Activated CD4-positive, alpha-beta T cell treated with anti-CD3 and anti-CD28 coated beads for 36 hours (primary cell): ENCODE measurements at regions of chr19 and their contacts with region 1.

Region 1: DNA sequence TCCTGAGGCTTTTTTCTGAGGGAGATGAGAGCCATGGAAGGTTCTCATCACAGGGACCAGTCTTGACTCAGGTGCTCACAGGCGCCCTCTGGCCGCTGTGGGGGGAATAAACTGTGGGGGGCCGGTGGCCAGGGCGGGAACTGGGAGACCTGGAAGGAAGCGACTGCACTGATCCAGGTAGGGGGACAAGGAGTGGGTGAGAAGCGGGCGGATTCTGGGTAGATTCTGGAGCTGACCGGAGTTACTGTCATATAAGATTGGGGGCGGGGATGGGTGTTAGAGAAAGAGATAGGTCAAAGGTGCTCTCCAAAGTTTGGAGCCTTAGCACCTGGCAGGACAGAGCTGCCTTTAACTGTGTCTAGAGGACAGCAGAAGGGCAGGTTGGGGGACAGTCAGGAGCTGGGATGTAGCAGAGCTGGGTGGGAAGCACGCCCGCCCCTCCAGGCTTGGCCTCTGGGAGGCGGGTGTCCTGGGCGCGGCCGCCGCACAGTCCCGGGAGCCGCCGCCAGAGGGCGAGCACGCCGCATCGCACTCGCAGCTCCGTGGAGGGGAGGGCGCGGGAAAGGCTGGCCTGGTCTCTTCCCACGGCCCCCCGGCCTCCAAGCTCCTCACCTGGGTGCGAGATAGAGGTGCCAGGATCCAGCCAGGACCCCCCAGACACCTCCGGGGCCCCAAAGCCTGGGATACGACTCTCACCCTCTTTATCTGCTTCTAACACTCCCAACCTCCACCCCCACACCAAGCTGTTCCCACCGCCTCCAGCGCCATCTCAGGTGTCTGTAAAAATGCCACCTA is 4.2 kb upstream of the DAND5 start:
- DNase-seq: peak; percentile 91
- ATAC-seq: peak; percentile 92
- H3K4me3 Mint-ChIP-seq: peak overlapping the region; percentile 73
- H3K27ac Mint-ChIP-seq: peak overlapping the region; percentile 89
- H3K4me1 Mint-ChIP-seq: peaks cover 11% of the 10 kb centered on the region
- H3K27me3 Mint-ChIP-seq: no peaks in the 10 kb centered on the region

Region 2: DNA sequence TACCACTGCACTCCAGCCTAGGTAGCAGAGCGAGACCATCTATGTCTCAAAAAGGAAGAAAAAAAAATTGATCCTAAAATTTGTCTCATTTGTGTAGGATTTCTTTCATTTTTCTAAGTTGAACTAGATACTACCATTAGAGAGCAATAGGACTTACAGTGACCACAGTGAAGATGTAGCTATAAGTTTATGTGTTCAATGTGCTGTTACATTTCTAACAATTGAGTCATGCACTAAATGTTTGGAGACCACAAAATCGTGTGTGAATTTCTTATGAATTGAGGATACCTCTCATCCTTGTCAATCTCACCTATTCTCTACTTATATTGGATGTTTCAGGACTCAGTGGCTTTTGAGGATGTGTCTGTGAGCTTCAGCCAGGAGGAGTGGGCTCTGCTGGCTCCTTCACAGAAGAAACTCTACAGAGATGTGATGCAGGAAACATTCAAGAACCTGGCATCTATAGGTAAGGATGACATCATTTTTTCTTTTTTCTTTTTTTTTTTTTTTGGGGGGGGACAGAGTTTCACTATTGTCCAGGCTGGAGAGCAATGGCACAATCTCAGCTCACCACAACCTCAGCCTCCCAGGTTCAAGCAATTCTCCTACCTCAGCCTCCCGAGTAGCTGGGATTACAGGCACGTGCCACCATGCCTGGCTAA is 341.7 kb before region 1 on chr19:
- CTCF ChIA-PET with region 1: no interaction called
- POLR2A ChIA-PET with region 1: no interaction called
- intact Hi-C with region 1: no loop called
- DNase-seq: no peak
- ATAC-seq: no peak
- H3K4me3 Mint-ChIP-seq: no peak overlapping the region
- H3K27ac Mint-ChIP-seq: no peak overlapping the region
- H3K4me1 Mint-ChIP-seq: peaks cover 3% of the 10 kb centered on the region
- H3K27me3 Mint-ChIP-seq: no peaks in the 10 kb centered on the region

Region 3: GRCh38 chr19:12938234-12939025 is 26.8 kb before region 1 on chr19 and contains the start of gene CALR:
- CTCF ChIA-PET with region 1: interaction called, 13 read pairs
- POLR2A ChIA-PET with region 1: no interaction called
- intact Hi-C with region 1: loop called in 1 of 2 experiments (anchors 1 kb)
- DNase-seq: peak; percentile 99
- ATAC-seq: peak; percentile 89
- H3K4me3 Mint-ChIP-seq: peak within 1 kb of the TSS; percentile 99
- H3K27ac Mint-ChIP-seq: peak within 1 kb of the TSS; percentile 96
- H3K4me1 Mint-ChIP-seq: peaks cover 59% of the 10 kb centered on the region
- H3K27me3 Mint-ChIP-seq: no peaks in the 10 kb centered on the region
- total RNA-seq, gene CALR: 557 to 569 TPM

Region 4: DNA sequence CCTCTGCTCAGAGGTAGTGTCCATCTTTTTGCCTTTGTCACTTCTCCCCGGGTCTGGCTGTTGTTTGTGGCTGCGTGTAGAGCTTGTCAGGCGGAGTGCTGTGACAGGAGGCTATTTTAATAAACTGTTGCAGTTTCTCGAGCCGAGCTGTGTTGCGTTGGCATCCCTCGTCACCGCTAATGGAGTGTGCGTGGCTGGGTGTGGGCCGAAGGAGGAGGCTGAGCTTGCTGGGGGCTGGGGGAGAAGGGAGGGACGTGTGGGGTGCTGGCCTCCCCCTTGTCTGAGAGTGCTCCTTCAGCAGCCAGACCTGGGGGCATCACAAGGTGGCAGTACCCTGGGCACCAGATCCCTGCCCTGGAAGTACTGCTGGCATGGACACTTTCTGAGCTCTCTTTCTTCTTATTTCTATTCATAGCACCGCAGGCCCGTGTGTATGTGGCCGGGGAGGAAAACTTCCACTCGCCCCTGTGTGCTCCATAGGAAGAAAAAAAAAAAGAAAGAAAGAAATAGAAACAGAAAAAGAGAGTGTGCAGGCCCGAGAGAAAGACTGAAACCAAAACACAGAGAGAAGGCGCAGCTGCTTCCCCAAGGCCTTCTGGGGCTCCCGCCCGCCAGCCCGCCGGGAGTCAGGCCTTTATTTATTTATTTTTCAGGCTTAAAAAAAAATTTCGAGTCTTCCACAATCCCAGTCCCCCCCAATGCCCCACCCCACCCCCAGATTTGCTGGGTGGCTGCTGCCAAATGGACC is 57.1 kb after region 1 on chr19:
- CTCF ChIA-PET with region 1: interaction called, 10 read pairs
- POLR2A ChIA-PET with region 1: no interaction called
- intact Hi-C with region 1: no loop called
- DNase-seq: peak; percentile 20
- ATAC-seq: no peak
- H3K4me3 Mint-ChIP-seq: no peak overlapping the region
- H3K27ac Mint-ChIP-seq: no peak overlapping the region
- H3K4me1 Mint-ChIP-seq: peaks cover 18% of the 10 kb centered on the region
- H3K27me3 Mint-ChIP-seq: peaks cover 35% of the 10 kb centered on the region

Region 5: GRCh38 chr19:13060964-13061927 is 96.0 kb after region 1 on chr19:
- CTCF ChIA-PET with region 1: interaction called, 61 read pairs
- POLR2A ChIA-PET with region 1: no interaction called
- intact Hi-C with region 1: no loop called
- DNase-seq: peak; percentile 89
- ATAC-seq: peak; percentile 99
- H3K4me3 Mint-ChIP-seq: peak overlapping the region; percentile 67
- H3K27ac Mint-ChIP-seq: no peak overlapping the region
- H3K4me1 Mint-ChIP-seq: peaks cover 6% of the 10 kb centered on the region
- H3K27me3 Mint-ChIP-seq: peaks cover 16% of the 10 kb centered on the region

Region 6: DNA sequence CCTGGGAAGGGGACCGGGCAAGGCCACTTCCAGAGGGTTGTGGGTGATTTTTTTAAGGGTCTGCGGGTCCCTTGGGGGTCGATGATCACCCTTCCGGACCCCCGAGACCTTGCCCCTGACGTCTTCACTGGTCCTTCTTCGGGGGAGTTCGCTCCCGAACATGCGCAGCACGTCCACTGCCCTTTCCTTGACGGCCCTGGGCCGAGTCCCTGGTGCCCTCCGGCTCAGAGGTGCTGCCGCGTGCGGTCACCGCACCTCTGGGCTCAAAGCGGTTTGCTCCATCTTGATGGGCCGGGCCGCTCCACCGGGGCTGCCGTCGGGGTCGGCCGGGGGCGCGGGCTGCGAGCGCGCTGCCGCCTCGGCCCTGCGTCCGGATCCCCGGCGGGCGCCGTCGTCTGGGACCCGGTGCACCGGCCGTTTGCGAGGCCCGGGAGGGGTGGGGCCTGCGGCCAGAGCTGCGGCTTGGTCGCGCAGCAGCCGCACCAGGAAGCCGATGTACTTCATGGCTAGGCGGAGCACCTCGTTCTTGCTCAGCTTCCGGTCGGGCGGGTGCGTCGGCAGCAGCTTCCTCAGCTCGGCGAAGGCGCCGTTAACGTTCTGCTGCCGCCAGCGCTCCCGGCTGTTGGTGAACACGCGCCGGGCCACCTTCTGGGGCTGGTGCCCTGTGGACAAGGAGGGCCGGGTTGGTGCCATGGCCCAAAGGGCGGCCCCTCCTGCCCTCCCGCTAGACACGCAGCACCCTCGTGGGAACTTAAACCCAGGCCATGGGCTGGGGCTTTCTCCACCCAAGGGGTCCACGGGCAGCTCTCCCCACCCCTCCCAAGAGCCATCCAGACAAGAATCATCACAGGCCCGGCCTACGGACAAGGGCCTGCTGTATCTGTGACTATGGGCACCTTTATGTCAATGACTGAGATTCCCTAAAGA is 134.1 kb after region 1 on chr19:
- CTCF ChIA-PET with region 1: interaction called, 34 read pairs
- POLR2A ChIA-PET with region 1: interaction called, 3 read pairs
- intact Hi-C with region 1: no loop called
- DNase-seq: peak; percentile 89
- ATAC-seq: peak; percentile 61
- H3K4me3 Mint-ChIP-seq: peak overlapping the region; percentile 65
- H3K27ac Mint-ChIP-seq: peak overlapping the region; percentile 85
- H3K4me1 Mint-ChIP-seq: peaks cover 54% of the 10 kb centered on the region
- H3K27me3 Mint-ChIP-seq: peaks cover 32% of the 10 kb centered on the region

Region 7: DNA sequence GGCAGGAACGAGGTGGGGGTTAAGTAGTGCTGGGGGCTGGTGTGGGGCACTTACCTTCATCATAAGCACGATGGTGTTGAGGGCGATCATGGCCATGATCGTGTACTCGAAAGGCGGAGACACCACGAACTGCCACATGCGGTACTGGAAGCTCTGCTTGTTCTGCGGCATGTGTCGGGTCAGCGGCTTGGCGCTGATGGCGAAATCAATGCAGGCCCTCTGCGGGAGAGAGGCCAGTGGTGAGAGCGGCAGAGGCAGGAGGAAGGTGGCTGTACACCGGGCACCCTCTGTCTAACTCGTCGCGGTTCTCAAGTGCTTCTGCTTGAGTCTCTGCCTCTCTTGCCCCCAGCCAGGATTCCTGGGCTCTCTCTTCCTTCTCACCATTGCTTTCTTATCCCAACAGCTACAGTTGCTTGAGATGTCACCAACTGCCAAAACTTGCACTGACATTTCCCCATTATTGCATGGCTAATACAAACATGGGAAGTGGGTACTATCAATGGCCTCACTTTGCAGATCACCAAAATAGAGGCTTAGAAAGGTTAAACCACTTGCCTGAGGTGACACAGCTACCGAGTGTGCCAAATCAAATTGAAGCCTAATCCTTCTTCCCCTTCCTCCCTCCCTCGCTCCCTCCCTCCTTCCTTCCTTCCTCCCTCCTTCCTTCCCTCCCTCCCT is 290.0 kb after region 1 on chr19:
- CTCF ChIA-PET with region 1: no interaction called
- POLR2A ChIA-PET with region 1: no interaction called
- intact Hi-C with region 1: no loop called
- DNase-seq: no peak
- ATAC-seq: no peak
- H3K4me3 Mint-ChIP-seq: no peak overlapping the region
- H3K27ac Mint-ChIP-seq: no peak overlapping the region
- H3K4me1 Mint-ChIP-seq: no peaks in the 10 kb centered on the region
- H3K27me3 Mint-ChIP-seq: peaks cover 22% of the 10 kb centered on the region

Region 8: GRCh38 chr19:13269348-13269747 is 304.1 kb after region 1 on chr19:
- CTCF ChIA-PET with region 1: no interaction called
- POLR2A ChIA-PET with region 1: no interaction called
- intact Hi-C with region 1: no loop called
- DNase-seq: no peak
- ATAC-seq: no peak
- H3K4me3 Mint-ChIP-seq: no peak overlapping the region
- H3K27ac Mint-ChIP-seq: no peak overlapping the region
- H3K4me1 Mint-ChIP-seq: no peaks in the 10 kb centered on the region
- H3K27me3 Mint-ChIP-seq: peaks cover 3% of the 10 kb centered on the region